ENCODE measurements at regions of chr14 and their contacts with region 1.

Region 1: DNA sequence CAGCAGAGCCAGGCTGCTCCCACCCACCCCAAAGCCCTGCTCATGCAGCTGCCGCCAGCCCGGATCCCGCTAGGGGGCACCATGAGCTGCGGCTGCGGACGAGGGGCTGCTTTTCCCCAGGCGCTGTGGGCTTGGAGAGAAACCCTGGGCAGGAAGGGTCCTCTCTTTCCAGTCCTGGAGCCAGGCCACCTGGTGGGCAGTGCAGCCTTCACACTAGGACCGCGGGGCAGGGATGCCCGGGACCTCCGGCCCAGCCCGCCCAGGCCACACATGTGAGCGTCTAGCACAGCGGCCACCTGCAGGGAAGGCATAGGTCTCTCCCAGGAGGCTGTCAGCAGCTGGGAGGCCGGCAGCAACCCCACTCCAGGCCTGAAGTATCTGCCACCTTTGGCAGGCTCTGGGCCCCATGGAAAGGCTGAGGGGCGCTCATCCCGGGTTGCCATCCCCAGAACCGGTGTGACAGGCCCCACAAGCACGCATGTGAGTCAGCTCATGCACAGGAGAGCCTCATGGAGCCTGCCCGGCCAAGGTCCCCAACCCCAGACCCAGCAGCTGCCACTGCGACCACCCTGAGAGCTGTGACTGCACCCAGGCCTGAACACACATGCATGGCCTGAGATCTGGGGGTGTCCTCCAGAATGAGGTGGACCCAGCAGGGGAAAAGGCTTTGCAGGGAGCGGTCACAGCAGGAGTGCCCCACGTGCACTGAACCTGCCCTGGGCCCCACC is 280.0 kb upstream of the RTL1 start:
- DNase-seq: peak in 1 of 9 experiments; percentile 38
- ATAC-seq: no peak
- H3K4me3 ChIP-seq: no peak overlapping the region
- H3K4me3 Mint-ChIP-seq: no peak overlapping the region
- H3K27ac ChIP-seq: no peak overlapping the region
- H3K27ac Mint-ChIP-seq: no peak overlapping the region
- H3K4me1 ChIP-seq: no peaks in the 10 kb centered on the region
- H3K4me1 Mint-ChIP-seq: no peaks in the 10 kb centered on the region
- H3K27me3 ChIP-seq: no peaks in the 10 kb centered on the region
- H3K27me3 Mint-ChIP-seq: no peaks in the 10 kb centered on the region
- CTCF ChIP-seq: no peak

Region 2: GRCh38 chr14:101120641-101121507 is 62.7 kb before region 1 on chr14:
- CTCF ChIA-PET with region 1: no interaction called
- POLR2A ChIA-PET with region 1: no interaction called
- intact Hi-C with region 1: no loop called
- DNase-seq: peak in 3 of 9 experiments; percentile 11 to 48 (median 43)
- ATAC-seq: peak; percentile 29
- H3K4me3 ChIP-seq: peak overlapping the region in 1 of 2 experiments; percentile 30
- H3K4me3 Mint-ChIP-seq: peak overlapping the region; percentile 63
- H3K27ac ChIP-seq: peak overlapping the region in 1 of 2 experiments; percentile 14
- H3K27ac Mint-ChIP-seq: peak overlapping the region; percentile 27
- H3K4me1 ChIP-seq: peaks cover 11% of the 10 kb centered on the region
- H3K4me1 Mint-ChIP-seq: peaks cover 16% of the 10 kb centered on the region
- H3K27me3 ChIP-seq: no peaks in the 10 kb centered on the region
- H3K27me3 Mint-ChIP-seq: peaks cover 10% of the 10 kb centered on the region
- CTCF ChIP-seq: no peak

Region 3: GRCh38 chr14:101665515-101666078 is 482.1 kb after region 1 on chr14:
- CTCF ChIA-PET with region 1: no interaction called
- POLR2A ChIA-PET with region 1: no interaction called
- intact Hi-C with region 1: loop called in 1 of 2 experiments (anchors 5 kb)
- DNase-seq: peak in 5 of 9 experiments; percentile 15 to 40 (median 28)
- ATAC-seq: no peak
- H3K4me3 ChIP-seq: no peak overlapping the region
- H3K4me3 Mint-ChIP-seq: no peak overlapping the region
- H3K27ac ChIP-seq: no peak overlapping the region
- H3K27ac Mint-ChIP-seq: no peak overlapping the region
- H3K4me1 ChIP-seq: no peaks in the 10 kb centered on the region
- H3K4me1 Mint-ChIP-seq: no peaks in the 10 kb centered on the region
- H3K27me3 ChIP-seq: peaks cover 0 to 9% of the 10 kb centered on the region in 2 experiments
- H3K27me3 Mint-ChIP-seq: peaks cover 39% of the 10 kb centered on the region
- CTCF ChIP-seq: no peak

Measured in CD8-positive, alpha-beta T cell (primary cell).